Cardiac septum (tissue), 1 donor: ENCODE measurements at regions of chr2 and their contacts with region 1.

Region 1: DNA sequence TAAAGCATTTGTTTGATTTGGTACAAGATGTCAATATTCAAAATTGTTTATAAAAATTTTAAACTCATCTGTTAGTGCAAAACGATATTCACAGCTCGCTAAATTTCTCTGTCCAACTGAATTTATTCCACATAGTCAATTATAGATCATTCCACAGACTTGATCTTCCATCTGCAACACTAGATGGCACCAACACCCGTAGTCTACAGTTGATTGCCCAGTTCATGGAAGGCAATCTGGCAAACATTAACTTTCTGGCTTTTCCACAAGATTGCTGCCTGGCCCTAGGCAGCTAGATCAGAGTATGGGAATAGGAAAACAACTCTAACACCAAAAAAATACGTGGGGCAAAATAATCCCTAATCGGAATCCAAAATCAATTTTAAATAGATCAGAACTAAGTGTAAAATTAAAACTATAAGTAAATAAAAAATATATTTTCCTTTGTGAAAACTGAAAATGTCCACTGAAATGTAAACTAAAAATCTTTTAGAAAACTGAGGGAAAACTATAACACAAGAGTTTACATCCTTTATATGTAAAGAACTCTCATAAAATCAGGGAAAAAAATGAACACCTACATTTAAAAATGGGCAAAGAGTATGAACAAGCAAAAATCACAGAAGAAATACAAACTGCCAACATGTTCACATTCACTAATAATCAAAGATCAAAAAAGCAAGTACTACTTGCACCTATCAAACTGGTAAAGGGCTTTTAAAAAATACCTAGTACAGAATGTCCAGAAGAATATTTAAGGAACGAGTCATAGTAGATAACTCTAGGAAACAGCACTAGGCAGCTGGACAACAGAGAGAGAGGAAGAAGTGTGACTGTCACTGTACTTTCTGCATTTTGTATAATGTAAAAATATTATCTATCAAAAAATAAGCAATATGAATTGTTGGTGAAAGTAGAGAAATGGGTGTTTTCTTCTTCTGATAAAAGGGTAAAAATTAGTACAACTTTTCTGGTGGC is 35.0 kb downstream of the RTN4 start:
- DNase-seq: no peak

Region 2: DNA sequence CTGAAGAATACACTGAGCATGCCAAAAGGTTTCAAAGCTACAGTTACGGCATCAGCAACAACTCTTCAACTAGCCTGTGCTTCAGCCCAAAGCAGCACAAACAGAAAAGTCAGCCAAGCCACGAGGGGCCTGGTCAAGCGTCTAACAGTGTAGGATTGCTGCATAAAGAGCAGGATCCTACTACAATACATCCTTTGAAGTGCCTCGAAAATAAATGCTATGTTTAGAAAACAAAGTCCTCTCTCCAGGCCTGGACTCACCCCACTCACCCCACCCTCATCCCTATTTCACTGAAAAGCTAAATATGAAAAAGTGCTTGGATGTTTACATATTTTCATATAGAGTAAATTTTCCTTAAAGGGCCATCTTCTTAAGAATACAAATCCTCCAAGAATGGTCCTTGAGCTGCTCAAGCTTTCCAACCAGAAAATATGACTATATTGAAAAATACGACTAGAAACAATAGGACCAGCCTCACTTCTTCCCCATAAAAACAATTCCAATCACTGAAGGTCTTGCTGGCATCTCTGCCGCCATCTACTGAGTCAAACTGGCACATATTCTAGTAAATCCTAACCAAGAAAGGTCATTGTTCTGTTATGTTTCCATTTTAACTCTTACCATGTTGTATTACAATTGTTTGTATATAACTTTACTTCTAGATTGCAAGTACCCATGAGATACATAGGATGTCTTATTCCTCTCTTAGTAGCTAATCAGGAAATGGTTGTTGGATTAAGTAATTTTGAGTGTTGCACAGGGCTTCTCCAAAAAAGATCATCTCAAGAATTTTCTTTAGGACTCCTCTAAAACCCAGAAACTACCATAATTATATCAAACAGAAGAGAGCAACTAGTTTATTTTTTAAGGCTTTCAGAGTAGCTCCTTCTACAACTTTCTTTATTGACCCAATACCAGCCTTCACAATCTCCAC is 153.2 kb after region 1 on chr2:
- intact Hi-C with region 1: loop called (anchors 2 kb)
- DNase-seq: no peak